Natural killer cell (primary cell): ENCODE measurements at regions of chr20 and their contacts with region 1.

Region 1: DNA sequence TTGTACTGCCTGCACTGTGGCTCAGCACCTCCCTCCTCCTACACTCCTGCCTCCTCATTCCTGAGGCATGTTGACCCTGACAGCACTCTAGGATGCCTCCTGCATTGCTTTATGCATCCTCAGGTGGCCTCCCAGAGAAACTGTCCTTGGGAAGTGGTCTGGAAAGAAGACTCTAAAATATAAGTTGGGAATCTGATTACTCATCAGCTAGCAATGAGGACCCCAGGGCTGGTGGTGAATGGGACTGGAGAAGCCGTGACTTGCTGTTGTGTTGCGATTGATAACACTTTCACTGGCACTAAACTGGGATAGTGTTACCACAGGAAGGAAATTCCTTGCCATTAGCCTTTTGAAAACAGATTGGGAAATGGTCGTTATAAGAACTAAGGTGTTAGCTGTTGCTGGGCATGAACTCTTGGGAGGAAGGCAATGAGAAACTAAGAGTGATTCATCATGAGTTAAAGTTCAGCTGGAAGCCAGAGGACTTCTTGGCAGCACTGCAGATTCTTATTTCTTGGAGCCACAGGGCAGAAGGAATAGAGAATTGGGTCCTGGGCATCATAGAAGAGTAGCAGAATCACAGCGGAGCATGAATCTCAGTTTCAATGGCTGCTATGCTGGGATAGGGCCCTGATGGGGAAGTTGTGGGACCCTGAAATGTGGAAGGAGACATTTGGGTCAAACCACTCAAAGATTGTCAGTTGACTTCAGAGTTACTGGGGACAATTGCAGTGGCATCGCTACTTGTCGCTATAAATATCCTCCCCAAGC is 10.1 kb upstream of the SIRPD start:
- DNase-seq: no peak
- ATAC-seq: no peak
- H3K4me3 ChIP-seq: no peak overlapping the region
- H3K4me3 Mint-ChIP-seq: no peak overlapping the region
- H3K27ac ChIP-seq: no peak overlapping the region
- H3K27ac Mint-ChIP-seq: no peak overlapping the region
- H3K4me1 ChIP-seq: peaks cover 3% of the 10 kb centered on the region
- H3K4me1 Mint-ChIP-seq: no peaks in the 10 kb centered on the region
- H3K27me3 ChIP-seq: no peaks in the 10 kb centered on the region
- H3K27me3 Mint-ChIP-seq: peaks cover 16 to 26% of the 10 kb centered on the region in 2 donors
- CTCF ChIP-seq: no peak

Region 2: GRCh38 chr20:1619861-1620444 is 52.4 kb after region 1 on chr20 and contains the start of gene SIRPB1:
- intact Hi-C with region 1: loop called (anchors 10 kb)
- DNase-seq: peak in 1 of 2 donors; percentile 20
- ATAC-seq: peak in 1 of 3 donors; percentile 69
- H3K4me3 ChIP-seq: no peak within 1 kb of the TSS
- H3K4me3 Mint-ChIP-seq: no peak within 1 kb of the TSS
- H3K27ac ChIP-seq: no peak within 1 kb of the TSS
- H3K27ac Mint-ChIP-seq: no peak within 1 kb of the TSS
- H3K4me1 ChIP-seq: peaks cover 35% of the 10 kb centered on the region
- H3K4me1 Mint-ChIP-seq: peaks cover 32 to 38% of the 10 kb centered on the region in 2 donors
- H3K27me3 ChIP-seq: no peaks in the 10 kb centered on the region
- H3K27me3 Mint-ChIP-seq: peaks cover 0 to 2% of the 10 kb centered on the region in 2 donors
- CTCF ChIP-seq: no peak
- total RNA-seq, gene SIRPB1: 2.6 to 7.2 (median 5.3) TPM